Natural killer cell (primary cell): ENCODE measurements at regions of chr2 and their contacts with region 1.

Region 1: DNA sequence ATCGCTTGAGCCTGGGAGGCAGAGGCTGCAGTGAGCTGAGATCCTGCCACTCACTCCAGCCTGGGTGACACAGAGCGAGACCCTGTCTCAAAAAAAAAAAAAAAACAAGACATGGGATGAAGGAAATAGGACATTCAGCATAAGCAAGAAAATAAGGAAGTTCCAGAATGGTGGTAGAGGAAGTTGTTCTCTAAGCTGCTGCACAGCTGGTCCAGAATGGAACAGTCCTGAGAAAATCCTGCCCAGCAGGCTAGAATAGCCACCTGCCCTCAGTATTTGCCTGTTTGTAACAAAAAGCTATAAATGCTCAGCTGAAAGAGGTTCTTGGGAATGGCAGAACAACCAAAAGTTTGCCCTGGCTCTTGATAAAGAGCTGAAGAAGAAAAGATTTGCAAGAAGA is 11.1 kb upstream of the MAPRE3 start:
- DNase-seq: no peak
- ATAC-seq: no peak
- H3K4me3 ChIP-seq: no peak overlapping the region
- H3K4me3 Mint-ChIP-seq: no peak overlapping the region
- H3K27ac ChIP-seq: no peak overlapping the region
- H3K27ac Mint-ChIP-seq: no peak overlapping the region
- H3K4me1 ChIP-seq: no peaks in the 10 kb centered on the region
- H3K4me1 Mint-ChIP-seq: no peaks in the 10 kb centered on the region
- H3K27me3 ChIP-seq: peaks cover 6% of the 10 kb centered on the region
- H3K27me3 Mint-ChIP-seq: peaks cover 10% of the 10 kb centered on the region in 2 donors
- CTCF ChIP-seq: no peak

Region 2: DNA sequence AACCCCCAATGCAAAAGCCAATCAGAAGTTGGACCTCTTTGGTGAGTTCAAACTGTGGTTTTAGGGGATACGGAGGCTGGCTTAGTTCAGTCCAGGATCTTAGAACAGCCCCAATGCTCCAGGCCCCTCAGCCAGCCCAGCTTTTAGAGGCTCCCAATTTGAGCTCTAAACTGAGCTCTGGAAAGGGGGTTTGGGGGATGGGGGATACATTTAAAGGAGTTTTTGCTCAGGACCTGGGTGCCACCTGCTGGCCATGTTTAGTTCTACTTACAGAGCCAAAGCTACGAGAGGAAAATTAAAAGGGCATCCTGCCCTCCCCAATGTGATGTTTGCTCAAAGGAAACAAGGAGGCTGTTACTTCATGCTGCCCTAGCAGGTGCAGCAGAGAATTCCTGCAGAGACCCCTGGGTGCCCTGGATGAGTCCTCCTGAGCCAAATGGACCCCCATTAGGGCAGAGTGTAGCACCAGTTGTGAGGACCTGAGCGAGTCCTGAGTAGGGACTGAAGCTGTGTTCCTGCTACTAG is 57.5 kb after region 1 on chr2:
- intact Hi-C with region 1: loop called (anchors 1 kb)
- DNase-seq: peak in 1 of 2 donors; percentile 69
- ATAC-seq: peak in 1 of 3 donors; percentile 43
- H3K4me3 ChIP-seq: no peak overlapping the region
- H3K4me3 Mint-ChIP-seq: no peak overlapping the region
- H3K27ac ChIP-seq: no peak overlapping the region
- H3K27ac Mint-ChIP-seq: no peak overlapping the region
- H3K4me1 ChIP-seq: no peaks in the 10 kb centered on the region
- H3K4me1 Mint-ChIP-seq: no peaks in the 10 kb centered on the region
- H3K27me3 ChIP-seq: no peaks in the 10 kb centered on the region
- H3K27me3 Mint-ChIP-seq: peaks cover 0 to 3% of the 10 kb centered on the region in 2 donors
- CTCF ChIP-seq: peak; percentile 31

Region 3: DNA sequence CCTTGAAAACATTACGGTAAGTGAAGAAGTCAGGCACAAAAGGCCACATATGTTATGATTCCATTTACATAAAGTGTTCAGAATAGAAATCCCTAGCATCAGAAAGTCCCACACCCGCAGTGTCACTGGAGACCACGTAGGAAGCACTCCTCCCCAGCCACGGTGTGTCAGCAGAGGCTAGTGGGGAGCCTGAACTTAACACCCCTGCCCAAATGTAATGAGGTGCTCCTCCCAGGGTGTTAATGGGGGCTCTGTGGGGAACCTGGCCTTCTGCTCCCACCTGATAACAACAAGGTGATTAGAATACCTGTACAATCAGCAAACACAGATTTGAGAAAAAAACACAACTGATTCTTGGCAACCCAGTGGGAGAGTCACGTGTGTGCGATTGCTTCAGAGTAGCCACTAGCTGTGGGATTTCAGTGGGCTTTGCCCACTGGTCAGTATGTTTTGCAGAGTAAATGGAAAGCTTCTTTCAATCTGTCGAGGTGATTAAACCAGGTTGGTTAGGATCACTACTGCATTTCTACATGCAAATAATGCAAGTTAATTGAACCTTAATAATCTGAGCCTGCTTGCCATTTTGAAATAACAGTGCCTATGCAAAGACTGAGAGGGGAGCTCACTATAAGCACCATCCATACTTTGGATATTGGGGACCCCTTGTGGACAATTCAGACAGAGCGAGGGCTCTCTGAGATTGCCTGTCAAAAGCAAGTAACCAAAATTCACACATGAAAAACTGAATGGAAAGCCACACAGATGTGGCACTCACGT is 231.9 kb after region 1 on chr2:
- intact Hi-C with region 1: loop called (anchors 1 kb)
- DNase-seq: peak in 1 of 2 donors; percentile 73
- ATAC-seq: peak; percentile 63 to 85 (median 77)
- H3K4me3 ChIP-seq: no peak overlapping the region
- H3K4me3 Mint-ChIP-seq: no peak overlapping the region
- H3K27ac ChIP-seq: no peak overlapping the region
- H3K27ac Mint-ChIP-seq: no peak overlapping the region
- H3K4me1 ChIP-seq: no peaks in the 10 kb centered on the region
- H3K4me1 Mint-ChIP-seq: no peaks in the 10 kb centered on the region
- H3K27me3 ChIP-seq: no peaks in the 10 kb centered on the region
- H3K27me3 Mint-ChIP-seq: peaks cover 0 to 4% of the 10 kb centered on the region in 2 donors
- CTCF ChIP-seq: peak; percentile 40

Region 4: GRCh38 chr2:27683390-27684071 is 724.2 kb after region 1 on chr2:
- intact Hi-C with region 1: no loop called
- DNase-seq: peak; percentile 78 to 97
- ATAC-seq: peak; percentile 80 to 93 (median 81)
- H3K4me3 ChIP-seq: no peak overlapping the region
- H3K4me3 Mint-ChIP-seq: peak overlapping the region; percentile 61
- H3K27ac ChIP-seq: peak overlapping the region; percentile 71
- H3K27ac Mint-ChIP-seq: peak overlapping the region; percentile 92 to 94
- H3K4me1 ChIP-seq: peaks cover 32% of the 10 kb centered on the region
- H3K4me1 Mint-ChIP-seq: peaks cover 25 to 30% of the 10 kb centered on the region in 2 donors
- H3K27me3 ChIP-seq: no peaks in the 10 kb centered on the region
- H3K27me3 Mint-ChIP-seq: no peaks in the 10 kb centered on the region
- CTCF ChIP-seq: peak; percentile 100